ENCODE measurements at regions of chr5 and their contacts with region 1.

Region 1: GRCh38 chr5:126544087-126544740 is 50.8 kb downstream of the ALDH7A1 start:
- DNase-seq: no peak
- ATAC-seq: no peak
- H3K4me3 ChIP-seq: no peak overlapping the region
- H3K27ac ChIP-seq: no peak overlapping the region
- H3K4me1 ChIP-seq: peaks cover 0 to 2% (median 0%) of the 10 kb centered on the region in 12 donors
- H3K27me3 ChIP-seq: no peaks in the 10 kb centered on the region
- CTCF ChIP-seq: peak; percentile 7 to 46 (median 26)
- POLR2A ChIP-seq: no peak

Region 2: GRCh38 chr5:126600631-126601511 is 56.7 kb after region 1 on chr5 and contains the start of gene PHAX:
- intact Hi-C with region 1: loop called in 1 of 10 experiments (anchors 5 kb)
- DNase-seq: peak; percentile 76 to 89 (median 83)
- ATAC-seq: peak; percentile 78 to 99 (median 96)
- H3K4me3 ChIP-seq: peak within 1 kb of the TSS; percentile 85 to 100 (median 98)
- H3K27ac ChIP-seq: peak within 1 kb of the TSS; percentile 69 to 92 (median 88)
- H3K4me1 ChIP-seq: peaks cover 4 to 47% (median 31%) of the 10 kb centered on the region in 12 donors
- H3K27me3 ChIP-seq: no peaks in the 10 kb centered on the region
- CTCF ChIP-seq: peak; percentile 51 to 90 (median 74)
- POLR2A ChIP-seq: no peak
- total RNA-seq, gene PHAX: 22.5 to 32.7 (median 30.8) TPM